ENCODE measurements at regions of chr18 and their contacts with region 1.

Region 1: DNA sequence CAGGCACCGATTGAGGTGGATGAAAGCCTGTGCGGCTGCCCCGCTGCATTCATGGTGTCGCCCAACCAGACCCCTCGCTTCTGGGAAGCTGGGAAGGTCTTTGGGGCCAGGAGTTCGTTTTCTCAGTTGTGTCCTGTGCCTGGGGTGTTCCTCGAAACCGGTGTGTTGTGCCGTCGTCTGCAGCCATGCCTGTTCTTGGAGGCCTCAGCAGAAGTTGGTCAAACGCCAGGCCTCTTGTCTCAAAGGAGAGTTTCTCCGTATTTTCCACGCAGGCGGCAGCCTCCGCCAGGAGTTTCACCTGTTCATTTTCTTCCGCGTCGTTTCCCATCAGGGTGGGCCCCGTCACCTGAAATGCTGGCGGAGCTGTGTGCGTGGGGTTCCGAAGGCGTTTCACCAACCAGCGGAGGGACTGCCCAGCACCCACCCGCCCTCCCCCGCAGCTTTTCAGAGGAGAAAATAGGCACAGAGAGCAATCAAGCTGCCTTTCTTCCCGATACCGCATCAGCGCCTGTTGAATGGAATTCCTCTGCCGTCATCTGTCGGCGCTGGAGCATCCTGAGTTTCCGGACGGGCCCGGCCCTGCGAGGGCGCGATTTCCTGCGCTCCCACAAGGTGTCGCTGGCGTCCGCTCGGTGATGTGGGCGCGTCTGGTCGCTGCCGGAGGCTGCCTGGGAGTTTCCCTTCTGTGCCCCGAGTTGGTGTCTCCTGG is 17.0 kb upstream of the NFATC1 start:
- DNase-seq: peak; percentile 89

Region 2: GRCh38 chr18:79644006-79644665 is 265.4 kb after region 1 on chr18:
- intact Hi-C with region 1: loop called (anchors 1 kb)
- DNase-seq: peak; percentile 84

Region 3: GRCh38 chr18:79944126-79944741 is 565.5 kb after region 1 on chr18:
- intact Hi-C with region 1: loop called (anchors 10 kb)
- DNase-seq: peak; percentile 67

Measured in cardiac septum (tissue), 1 donor.